ENCODE measurements at regions of chr18 and their contacts with region 1.

Region 1: DNA sequence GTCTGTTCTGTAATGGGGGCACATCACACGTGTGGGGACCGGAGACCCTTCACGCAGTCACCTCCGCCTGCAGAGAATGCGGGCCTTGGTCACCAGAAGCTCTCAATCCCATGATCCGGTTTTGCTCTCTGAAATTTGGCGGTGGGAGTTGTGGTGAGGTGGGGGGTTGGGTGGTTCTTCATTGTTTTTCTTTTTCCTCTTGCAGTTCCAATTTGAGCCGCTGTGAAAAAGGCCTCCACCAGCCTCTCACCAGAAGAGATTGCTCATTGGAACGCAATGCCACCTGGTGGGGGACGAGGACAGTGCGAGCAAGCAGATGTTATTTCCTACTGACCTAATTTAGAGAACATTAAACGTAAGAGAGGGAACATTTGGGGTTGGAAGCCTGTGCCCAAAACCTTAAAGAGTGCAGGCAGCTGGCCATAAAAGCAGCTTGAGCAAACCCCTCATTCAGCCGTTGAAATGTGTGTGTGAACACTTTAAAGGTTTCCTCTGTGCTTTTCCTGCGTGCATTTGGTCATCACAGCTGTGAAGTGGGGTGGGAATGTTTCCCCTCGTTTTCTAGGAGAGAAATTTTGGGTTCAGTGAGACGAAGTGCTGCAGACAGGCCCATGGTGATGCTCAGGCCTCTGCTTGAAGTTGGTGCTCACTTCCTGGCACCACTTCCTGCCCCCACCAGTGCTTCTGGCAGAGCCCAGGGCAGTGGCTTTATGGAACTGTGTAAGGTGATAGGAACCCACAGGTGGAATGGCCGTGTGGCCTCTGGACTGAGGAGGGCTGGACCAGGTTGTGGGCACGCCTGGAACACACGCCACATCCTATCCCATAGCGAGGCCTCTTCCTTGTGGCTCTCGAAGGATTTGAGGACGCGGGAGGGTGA is 61.7 kb downstream of the ZCCHC2 start:
- DNase-seq: peak; percentile 85 to 89
- H3K4me3 ChIP-seq: peak overlapping the region in 1 of 3 donors; percentile 32
- H3K27ac ChIP-seq: peak overlapping the region; percentile 57 to 59
- H3K4me1 ChIP-seq: peaks cover 0 to 3% of the 10 kb centered on the region in 2 donors
- H3K27me3 ChIP-seq: no peaks in the 10 kb centered on the region
- CTCF ChIP-seq: peak; percentile 99
- POLR2A ChIP-seq: no peak

Region 2: GRCh38 chr18:62186774-62187542 is 397.5 kb before region 1 on chr18 and contains the starts of genes PIGN and RELCH:
- intact Hi-C with region 1: loop called (anchors 10 kb)
- DNase-seq: peak; percentile 94 to 97
- H3K4me3 ChIP-seq: peak within 1 kb of the TSS; percentile 84 to 97 (median 96)
- H3K27ac ChIP-seq: peak within 1 kb of the TSS; percentile 86 to 87
- H3K4me1 ChIP-seq: peaks cover 0 to 6% of the 10 kb centered on the region in 2 donors
- H3K27me3 ChIP-seq: no peaks in the 10 kb centered on the region
- CTCF ChIP-seq: no peak
- POLR2A ChIP-seq: peak; percentile 54
- total RNA-seq, gene PIGN: 33.1 to 67.2 (median 47.9) TPM
- total RNA-seq, gene RELCH: 33.0 to 69.4 (median 45.9) TPM

Region 3: GRCh38 chr18:64259871-64260270 is 1675.4 kb after region 1 on chr18:
- intact Hi-C with region 1: no loop called
- DNase-seq: no peak
- H3K4me3 ChIP-seq: no peak overlapping the region
- H3K27ac ChIP-seq: no peak overlapping the region
- H3K4me1 ChIP-seq: no peaks in the 10 kb centered on the region
- H3K27me3 ChIP-seq: no peaks in the 10 kb centered on the region
- CTCF ChIP-seq: no peak
- POLR2A ChIP-seq: no peak